Calu3 (cell line): ENCODE measurements at regions of chr18 and their contacts with region 1.

Region 1: DNA sequence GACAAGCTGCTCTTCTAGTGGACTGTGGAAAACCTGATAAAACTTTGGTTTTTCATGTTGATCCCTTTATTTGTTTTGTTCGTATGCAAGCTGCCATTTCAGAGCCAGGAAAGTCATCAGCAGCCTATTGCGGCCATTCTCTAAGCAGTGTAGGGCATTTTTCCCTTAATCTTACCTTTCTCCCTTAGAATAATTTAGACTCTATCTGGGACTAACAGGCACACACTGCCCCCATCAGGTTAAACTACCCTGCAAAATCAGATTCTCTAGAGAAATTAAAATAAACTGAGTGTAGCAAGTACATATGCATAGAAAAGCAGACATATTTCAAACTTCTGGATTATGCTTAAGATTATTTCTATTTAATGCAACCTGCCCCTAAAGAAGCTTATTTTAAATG is 347.5 kb downstream of the METTL4 start:
- DNase-seq: peak; percentile 52
- H3K4me3 Mint-ChIP-seq: peak overlapping the region; percentile 51
- H3K27ac Mint-ChIP-seq: peak overlapping the region; percentile 96
- H3K4me1 Mint-ChIP-seq: peaks cover 28% of the 10 kb centered on the region
- H3K27me3 Mint-ChIP-seq: no peaks in the 10 kb centered on the region
- CTCF ChIP-seq: peak; percentile 40

Region 2: DNA sequence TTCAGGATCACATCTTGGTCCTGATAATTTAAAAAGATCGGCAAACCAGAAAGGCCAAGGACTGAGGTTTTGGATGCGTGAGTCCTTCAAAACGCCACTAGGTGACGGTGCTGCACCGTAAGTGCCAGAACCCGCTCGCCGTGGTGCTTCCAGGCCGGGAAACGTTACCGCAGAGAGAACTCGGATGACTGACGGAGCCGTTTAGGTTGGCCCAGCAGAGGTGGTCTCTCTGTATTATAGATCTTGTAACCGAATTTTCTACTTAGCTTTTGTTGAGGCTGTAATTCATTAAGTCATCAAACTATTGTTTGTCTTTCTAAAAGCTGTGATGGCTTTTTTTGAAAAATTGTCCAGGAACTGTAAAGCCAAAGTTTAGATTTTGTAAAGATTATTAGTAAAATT is 1359.0 kb before region 1 on chr18:
- CTCF ChIA-PET with region 1: no interaction called
- intact Hi-C with region 1: loop called (anchors 5 kb)
- DNase-seq: peak; percentile 71
- H3K4me3 Mint-ChIP-seq: no peak overlapping the region
- H3K27ac Mint-ChIP-seq: no peak overlapping the region
- H3K4me1 Mint-ChIP-seq: no peaks in the 10 kb centered on the region
- H3K27me3 Mint-ChIP-seq: peaks cover 47% of the 10 kb centered on the region
- CTCF ChIP-seq: peak; percentile 94

Region 3: DNA sequence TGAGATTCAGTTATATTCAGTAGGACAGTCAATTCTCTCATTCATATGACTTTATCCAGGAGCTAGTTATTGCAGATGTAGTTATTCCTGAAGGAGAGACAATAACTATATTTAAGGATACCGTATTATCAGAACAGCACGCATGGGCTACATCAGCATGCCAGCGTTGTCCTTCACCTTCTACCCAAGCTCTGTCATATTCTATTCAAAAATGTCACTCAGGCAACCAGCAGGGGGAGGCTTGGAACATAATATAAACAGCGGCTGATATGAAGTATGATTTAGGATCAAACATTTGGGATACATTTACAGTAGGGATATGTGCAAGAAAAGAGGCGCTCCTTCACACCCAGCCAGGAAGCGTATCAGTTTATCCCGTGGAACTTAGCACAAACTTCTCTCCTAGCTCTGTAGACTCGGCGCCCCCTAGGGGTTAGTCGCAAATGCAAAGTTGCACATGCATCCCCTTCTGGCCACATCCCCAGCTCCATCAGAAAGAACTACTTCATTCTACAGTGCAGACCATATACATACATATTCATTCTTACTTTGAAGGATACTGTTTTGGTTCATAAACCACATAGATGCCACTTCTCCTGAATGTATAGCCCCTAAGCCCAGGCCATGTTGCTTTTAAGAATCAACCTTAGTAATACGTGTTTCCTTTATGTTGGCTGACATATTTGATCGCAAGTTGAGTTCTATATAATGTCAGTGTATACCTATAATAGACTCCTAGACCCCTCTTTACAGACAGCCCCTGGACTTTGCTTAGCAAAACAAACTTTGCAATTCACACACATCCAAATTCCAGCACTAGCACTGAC is 559.8 kb before region 1 on chr18:
- CTCF ChIA-PET with region 1: no interaction called
- intact Hi-C with region 1: loop called (anchors 10 kb)
- DNase-seq: peak; percentile 78
- H3K4me3 Mint-ChIP-seq: no peak overlapping the region
- H3K27ac Mint-ChIP-seq: no peak overlapping the region
- H3K4me1 Mint-ChIP-seq: no peaks in the 10 kb centered on the region
- H3K27me3 Mint-ChIP-seq: no peaks in the 10 kb centered on the region
- CTCF ChIP-seq: peak; percentile 97

Region 4: DNA sequence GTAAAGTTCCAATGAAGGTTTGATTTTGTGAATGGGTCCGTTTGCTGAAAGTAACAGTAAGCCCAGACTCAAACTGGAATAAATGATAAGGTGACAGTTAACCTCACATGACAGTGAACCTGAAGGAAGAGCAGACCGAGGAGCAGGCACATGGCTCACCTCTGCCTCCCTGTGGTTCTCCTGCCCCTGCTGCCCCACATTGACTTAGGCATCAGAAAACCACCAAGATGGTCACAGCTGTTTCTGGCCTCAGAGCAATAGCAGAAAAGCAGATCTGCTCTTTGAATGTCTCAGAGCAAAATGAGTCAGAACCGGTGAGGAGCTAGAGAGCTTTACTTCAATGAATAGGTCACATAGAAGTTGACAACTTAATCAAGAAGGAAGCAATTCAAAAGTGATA is 140.2 kb before region 1 on chr18:
- CTCF ChIA-PET with region 1: no interaction called
- intact Hi-C with region 1: loop called (anchors 5 kb)
- DNase-seq: peak; percentile 21
- H3K4me3 Mint-ChIP-seq: no peak overlapping the region
- H3K27ac Mint-ChIP-seq: no peak overlapping the region
- H3K4me1 Mint-ChIP-seq: peaks cover 10% of the 10 kb centered on the region
- H3K27me3 Mint-ChIP-seq: no peaks in the 10 kb centered on the region
- CTCF ChIP-seq: peak; percentile 49

Region 5: GRCh38 chr18:2180586-2180985 is 43.3 kb before region 1 on chr18:
- CTCF ChIA-PET with region 1: interaction called, 5 read pairs
- intact Hi-C with region 1: loop called (anchors 5 kb)
- DNase-seq: peak; percentile 58
- H3K4me3 Mint-ChIP-seq: no peak overlapping the region
- H3K27ac Mint-ChIP-seq: peak overlapping the region; percentile 71
- H3K4me1 Mint-ChIP-seq: peaks cover 15% of the 10 kb centered on the region
- H3K27me3 Mint-ChIP-seq: no peaks in the 10 kb centered on the region
- CTCF ChIP-seq: no peak

Region 6: GRCh38 chr18:2254977-2255376 is 31.1 kb after region 1 on chr18:
- CTCF ChIA-PET with region 1: no interaction called
- intact Hi-C with region 1: no loop called
- DNase-seq: no peak
- H3K4me3 Mint-ChIP-seq: no peak overlapping the region
- H3K27ac Mint-ChIP-seq: no peak overlapping the region
- H3K4me1 Mint-ChIP-seq: no peaks in the 10 kb centered on the region
- H3K27me3 Mint-ChIP-seq: no peaks in the 10 kb centered on the region
- CTCF ChIP-seq: no peak

Region 7: DNA sequence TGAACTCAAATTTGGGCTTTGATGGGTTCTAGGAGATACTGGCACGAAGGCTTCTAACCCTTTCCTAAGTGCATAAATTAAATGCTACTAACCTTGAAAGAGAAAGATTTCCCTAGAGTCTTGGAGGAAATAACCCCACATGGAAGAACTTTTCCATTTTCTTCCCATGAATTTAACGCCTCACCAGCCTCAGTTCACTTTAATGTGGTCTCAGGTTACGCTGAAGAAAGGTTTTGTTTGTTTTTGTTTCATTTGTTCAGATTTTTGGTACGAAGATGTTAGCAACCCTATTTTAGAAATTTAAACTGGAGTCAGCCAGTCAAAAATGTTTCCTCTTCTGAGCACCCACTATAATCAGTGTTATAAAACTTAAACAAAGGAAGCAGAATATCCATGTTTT is 316.7 kb after region 1 on chr18:
- CTCF ChIA-PET with region 1: no interaction called
- intact Hi-C with region 1: loop called (anchors 5 kb)
- DNase-seq: no peak
- H3K4me3 Mint-ChIP-seq: no peak overlapping the region
- H3K27ac Mint-ChIP-seq: no peak overlapping the region
- H3K4me1 Mint-ChIP-seq: no peaks in the 10 kb centered on the region
- H3K27me3 Mint-ChIP-seq: no peaks in the 10 kb centered on the region
- CTCF ChIP-seq: no peak